Breast epithelium (tissue), 4 donors: ENCODE measurements at regions of chr1 and their contacts with region 1.

Region 1: GRCh38 chr1:110106013-110106941 is 6.0 kb upstream of the UBL4B start:
- DNase-seq: peak; percentile 46 to 62
- H3K4me3 ChIP-seq: no peak overlapping the region
- H3K27ac ChIP-seq: no peak overlapping the region
- H3K4me1 ChIP-seq: no peaks in the 10 kb centered on the region
- H3K27me3 ChIP-seq: no peaks in the 10 kb centered on the region
- CTCF ChIP-seq: peak; percentile 51 to 86 (median 84)
- POLR2A ChIP-seq: no peak

Region 2: DNA sequence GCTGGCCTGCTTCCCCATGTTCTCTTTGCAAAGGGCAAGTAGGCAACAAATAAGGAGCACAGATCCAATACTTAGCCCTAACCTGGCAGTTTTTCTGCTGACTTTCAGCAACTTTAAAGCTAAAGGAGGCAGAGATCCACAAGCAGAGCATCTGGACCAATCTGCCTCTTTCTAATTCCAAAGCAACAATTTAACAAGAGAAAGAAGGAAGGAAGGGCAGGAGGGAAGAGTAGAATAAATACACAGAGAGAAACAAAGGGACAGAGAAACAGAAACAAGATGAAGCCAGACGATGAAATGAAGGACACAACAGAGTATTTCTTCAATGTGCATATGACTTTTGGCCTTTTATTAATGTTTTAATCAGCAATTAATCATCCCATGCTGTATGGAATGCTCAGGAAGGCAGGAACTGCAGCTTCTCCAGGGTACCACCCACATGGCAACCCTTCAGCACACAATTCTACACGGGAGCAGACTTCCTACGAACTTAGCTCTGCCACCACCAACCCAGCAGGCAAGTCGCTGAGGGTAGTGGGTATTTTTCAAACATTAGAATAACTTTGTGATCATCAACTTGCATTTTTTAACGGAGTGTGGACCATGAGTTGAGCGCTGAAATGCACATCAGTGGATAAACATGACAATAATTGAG is 1158.3 kb before region 1 on chr1:
- intact Hi-C with region 1: loop called (anchors 5 kb)
- DNase-seq: no peak
- H3K4me3 ChIP-seq: peak overlapping the region in 2 of 3 donors; percentile 20 to 30
- H3K27ac ChIP-seq: peak overlapping the region; percentile 33 to 56
- H3K4me1 ChIP-seq: no peaks in the 10 kb centered on the region
- H3K27me3 ChIP-seq: no peaks in the 10 kb centered on the region
- CTCF ChIP-seq: no peak
- POLR2A ChIP-seq: no peak

Region 3: DNA sequence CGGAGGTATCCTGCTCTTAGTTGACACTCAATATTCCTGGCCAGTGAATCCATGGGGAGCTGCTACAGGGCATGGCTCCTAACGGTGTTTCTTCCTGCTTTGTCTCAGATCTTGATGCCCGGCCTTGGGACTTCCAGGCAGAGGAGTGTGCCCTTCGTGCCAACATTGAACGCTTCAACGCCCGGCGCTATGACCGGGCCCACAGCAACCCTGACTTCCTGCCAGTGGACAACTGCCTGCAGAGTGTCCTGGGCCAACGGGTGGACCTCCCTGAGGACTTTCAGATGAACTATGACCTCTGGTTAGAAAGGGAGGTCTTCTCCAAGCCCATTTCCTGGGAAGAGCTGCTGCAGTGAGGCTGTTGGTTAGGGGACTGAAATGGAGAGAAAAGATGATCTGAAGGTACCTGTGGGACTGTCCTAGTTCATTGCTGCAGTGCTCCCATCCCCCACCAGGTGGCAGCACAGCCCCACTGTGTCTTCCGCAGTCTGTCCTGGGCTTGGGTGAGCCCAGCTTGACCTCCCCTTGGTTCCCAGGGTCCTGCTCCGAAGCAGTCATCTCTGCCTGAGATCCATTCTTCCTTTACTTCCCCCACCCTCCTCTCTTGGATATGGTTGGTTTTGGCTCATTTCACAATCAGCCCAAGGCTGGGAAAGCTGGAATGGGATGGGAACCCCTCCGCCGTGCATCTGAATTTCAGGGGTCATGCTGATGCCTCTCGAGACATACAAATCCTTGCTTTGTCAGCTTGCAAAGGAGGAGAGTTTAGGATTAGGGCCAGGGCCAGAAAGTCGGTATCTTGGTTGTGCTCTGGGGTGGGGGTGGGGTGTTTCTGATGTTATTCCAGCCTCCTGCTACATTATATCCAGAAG is 52.5 kb before region 1 on chr1:
- intact Hi-C with region 1: loop called (anchors 10 kb)
- DNase-seq: peak; percentile 43 to 76
- H3K4me3 ChIP-seq: no peak overlapping the region
- H3K27ac ChIP-seq: no peak overlapping the region
- H3K4me1 ChIP-seq: peaks cover 0 to 13% of the 10 kb centered on the region in 2 donors
- H3K27me3 ChIP-seq: no peaks in the 10 kb centered on the region
- CTCF ChIP-seq: peak; percentile 78 to 86 (median 81)
- POLR2A ChIP-seq: no peak

Region 4: GRCh38 chr1:110524311-110525251 is 418.3 kb after region 1 on chr1:
- intact Hi-C with region 1: no loop called
- DNase-seq: no peak
- H3K4me3 ChIP-seq: peak overlapping the region in 1 of 3 donors; percentile 41
- H3K27ac ChIP-seq: no peak overlapping the region
- H3K4me1 ChIP-seq: no peaks in the 10 kb centered on the region
- H3K27me3 ChIP-seq: peaks cover 0 to 14% of the 10 kb centered on the region in 2 donors
- CTCF ChIP-seq: peak in 2 of 3 donors; percentile 28 to 33
- POLR2A ChIP-seq: no peak